ENCODE measurements at regions of chr1 and their contacts with region 1.

Region 1: GRCh38 chr1:225977937-225978748 is 21.0 kb downstream of the SDE2 start:
- DNase-seq: no peak
- ATAC-seq: no peak
- H3K4me3 ChIP-seq: no peak overlapping the region
- H3K27ac ChIP-seq: no peak overlapping the region
- H3K4me1 ChIP-seq: peaks cover 0 to 12% (median 0%) of the 10 kb centered on the region in 12 donors
- H3K27me3 ChIP-seq: no peaks in the 10 kb centered on the region
- CTCF ChIP-seq: no peak
- POLR2A ChIP-seq: no peak

Region 2: DNA sequence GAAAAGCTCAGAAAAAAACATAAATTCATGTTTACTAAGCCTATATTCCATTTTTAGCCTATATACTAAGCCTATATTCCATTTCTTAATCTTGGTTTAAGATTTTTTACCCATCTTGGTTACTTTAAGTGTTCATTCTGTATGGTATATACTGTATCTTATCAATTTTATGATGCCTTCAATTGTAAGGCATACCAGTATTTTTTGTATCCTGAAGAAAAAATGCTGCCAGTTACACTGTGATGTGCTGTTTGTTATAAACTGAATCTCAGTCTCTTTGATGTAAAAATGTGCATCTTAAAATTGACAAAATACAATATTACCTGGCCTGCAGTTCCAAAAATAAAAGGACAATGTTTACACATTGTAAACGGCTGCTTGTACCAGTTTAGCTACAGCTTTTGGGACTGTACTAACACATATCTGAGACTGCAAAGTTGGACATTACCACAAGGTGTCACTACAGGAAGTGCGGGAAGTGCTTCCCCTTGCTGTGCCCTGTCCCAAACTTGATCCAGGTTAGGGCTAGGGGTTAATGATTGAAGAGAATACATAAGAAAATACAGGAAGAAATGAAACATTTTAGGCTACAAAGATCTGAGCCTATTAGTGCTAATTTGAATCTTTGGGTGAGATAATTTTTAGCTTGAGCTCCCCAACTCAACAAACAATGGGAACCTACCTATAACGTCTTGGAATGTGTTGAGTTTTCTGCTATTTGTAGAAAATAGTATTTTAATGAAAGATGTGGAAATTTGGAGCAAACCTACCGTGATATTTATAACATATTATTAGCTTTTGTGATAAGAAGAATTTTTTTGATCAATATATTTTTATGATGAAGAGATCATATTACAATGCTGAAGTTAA is 659.2 kb before region 1 on chr1:
- intact Hi-C with region 1: loop called in 9 of 10 experiments (anchors 1 to 10 kb)
- DNase-seq: peak in 1 of 5 donors; percentile 26
- ATAC-seq: peak in 3 of 4 donors; percentile 62 to 78 (median 72)
- H3K4me3 ChIP-seq: no peak overlapping the region
- H3K27ac ChIP-seq: no peak overlapping the region
- H3K4me1 ChIP-seq: no peaks in the 10 kb centered on the region
- H3K27me3 ChIP-seq: peaks cover 0 to 17% (median 0%) of the 10 kb centered on the region in 9 donors
- CTCF ChIP-seq: peak; percentile 43 to 78 (median 60)
- POLR2A ChIP-seq: no peak

Region 3: DNA sequence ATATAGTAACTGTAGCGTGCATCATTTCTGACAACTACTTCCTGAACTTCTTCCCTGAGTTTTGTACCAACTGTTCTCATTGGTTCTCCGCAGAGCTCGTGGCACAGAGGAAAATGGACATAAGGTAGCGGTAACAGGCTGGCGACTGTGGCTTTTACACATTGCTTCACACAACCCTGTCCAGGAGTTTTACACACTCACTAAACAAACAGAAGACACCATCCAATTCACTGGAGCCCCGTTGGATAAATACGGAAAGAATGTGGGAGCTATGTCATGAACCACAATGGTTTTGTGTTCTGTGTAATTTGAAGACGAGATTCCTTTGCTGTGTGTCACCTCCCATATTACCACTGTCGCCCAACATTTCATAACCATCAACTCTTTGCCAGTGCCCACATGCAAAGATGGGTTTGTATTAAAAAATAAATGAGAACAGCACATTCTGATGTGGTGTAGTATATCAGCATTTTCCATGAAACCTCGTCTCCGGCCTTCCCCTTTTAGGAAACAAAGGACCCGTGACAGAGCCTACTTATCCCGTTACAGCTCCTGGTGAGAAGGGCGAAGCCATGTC is 277.9 kb before region 1 on chr1:
- intact Hi-C with region 1: no loop called
- DNase-seq: no peak
- ATAC-seq: peak in 1 of 4 donors; percentile 61
- H3K4me3 ChIP-seq: no peak overlapping the region
- H3K27ac ChIP-seq: peak overlapping the region in 2 of 12 donors; percentile 3 to 54
- H3K4me1 ChIP-seq: peaks cover 0 to 41% (median 13%) of the 10 kb centered on the region in 12 donors
- H3K27me3 ChIP-seq: no peaks in the 10 kb centered on the region
- CTCF ChIP-seq: no peak
- POLR2A ChIP-seq: no peak

Region 4: GRCh38 chr1:225772323-225772768 is 205.8 kb before region 1 on chr1:
- intact Hi-C with region 1: loop called in 8 of 10 experiments (anchors 5 to 10 kb)
- DNase-seq: peak; percentile 81 to 90 (median 84)
- ATAC-seq: peak; percentile 81 to 90 (median 88)
- H3K4me3 ChIP-seq: no peak overlapping the region
- H3K27ac ChIP-seq: peak overlapping the region in 9 of 12 donors; percentile 2 to 75 (median 44)
- H3K4me1 ChIP-seq: peaks cover under 1 to 70% (median 40%) of the 10 kb centered on the region in 12 donors
- H3K27me3 ChIP-seq: no peaks in the 10 kb centered on the region
- CTCF ChIP-seq: peak; percentile 76 to 94 (median 90)
- POLR2A ChIP-seq: no peak

Region 5: DNA sequence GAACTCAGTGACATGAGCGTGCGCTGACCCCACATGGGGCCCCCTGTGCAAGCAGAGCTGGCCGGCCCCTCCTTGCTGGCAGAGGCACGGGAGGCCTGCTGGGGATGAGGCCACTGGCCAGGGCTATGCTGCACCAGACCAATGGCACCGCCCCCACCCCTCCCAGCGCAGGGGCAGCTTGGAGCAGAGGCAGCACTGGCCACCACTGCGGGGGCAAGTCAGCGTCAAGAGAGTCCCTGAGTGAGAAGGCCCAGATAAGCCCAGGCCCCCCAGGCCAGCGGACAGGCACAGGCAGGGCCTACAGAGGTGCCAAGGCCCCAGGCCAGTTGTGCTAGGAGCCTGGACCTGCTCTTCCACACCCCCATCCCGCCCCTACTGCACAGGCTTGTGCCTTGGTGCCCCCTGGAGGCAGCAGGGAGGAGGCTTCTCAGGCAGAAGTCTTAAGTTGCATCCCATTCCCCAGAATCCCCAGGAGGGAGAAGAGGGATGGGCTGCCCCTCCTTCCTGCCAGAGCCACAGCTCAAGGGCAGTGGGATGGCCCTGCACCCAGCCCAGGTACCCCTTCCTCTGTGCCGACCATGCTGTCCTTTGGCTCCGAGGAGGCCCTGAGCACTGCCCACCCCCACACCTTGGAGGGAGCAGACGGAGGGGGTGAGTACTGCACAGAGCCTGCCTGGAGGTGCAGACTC is 132.4 kb before region 1 on chr1:
- intact Hi-C with region 1: loop called in 1 of 10 experiments (anchors 10 kb)
- DNase-seq: peak; percentile 77 to 87 (median 82)
- ATAC-seq: peak; percentile 66 to 83 (median 82)
- H3K4me3 ChIP-seq: no peak overlapping the region
- H3K27ac ChIP-seq: peak overlapping the region in 6 of 12 donors; percentile 6 to 71 (median 17)
- H3K4me1 ChIP-seq: peaks cover 0 to 30% (median 16%) of the 10 kb centered on the region in 12 donors
- H3K27me3 ChIP-seq: no peaks in the 10 kb centered on the region
- CTCF ChIP-seq: peak; percentile 56 to 87 (median 74)
- POLR2A ChIP-seq: no peak

Region 6: DNA sequence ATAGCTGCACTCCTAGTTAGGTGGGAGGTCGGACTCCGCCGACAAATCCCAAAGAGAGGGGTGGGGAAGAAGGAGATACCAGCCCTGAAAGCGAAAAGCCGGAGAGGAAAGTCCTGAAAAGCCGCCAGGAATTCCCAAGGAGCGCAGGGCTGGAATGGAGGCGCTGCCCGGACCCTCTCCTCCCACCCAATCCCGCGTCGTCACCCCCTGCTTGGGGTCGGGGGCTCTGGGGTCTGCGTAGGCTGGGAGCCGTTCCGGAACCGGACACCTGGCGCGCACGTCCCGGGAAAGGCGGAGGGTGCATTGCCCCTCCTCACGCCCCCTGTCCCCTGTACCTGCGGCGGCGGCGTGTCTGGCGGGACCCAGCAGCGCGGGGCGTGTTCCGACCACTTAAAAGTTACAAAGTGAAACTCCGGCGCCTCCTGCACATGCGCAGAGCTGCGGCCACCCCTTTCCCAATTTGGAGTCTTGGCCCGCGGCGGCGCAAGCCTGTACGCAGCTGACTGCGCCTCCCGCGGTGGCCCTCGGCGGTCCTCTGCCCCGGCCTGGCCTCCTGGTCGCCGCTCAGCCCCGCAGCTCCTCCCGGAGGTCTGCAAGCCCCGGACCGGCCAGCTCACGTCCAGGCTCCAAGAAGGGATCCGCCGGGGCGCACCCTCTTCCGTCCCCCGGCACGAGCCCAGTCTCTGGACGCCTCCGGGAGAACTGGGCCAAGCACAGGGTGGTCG is 96.0 kb before region 1 on chr1 and contains the start of gene TMEM63A:
- intact Hi-C with region 1: loop called in 1 of 10 experiments (anchors 10 kb)
- DNase-seq: peak; percentile 94 to 98 (median 96)
- ATAC-seq: peak; percentile 85 to 93 (median 92)
- H3K4me3 ChIP-seq: peak within 1 kb of the TSS; percentile 71 to 99 (median 90)
- H3K27ac ChIP-seq: peak within 1 kb of the TSS; percentile 82 to 98 (median 90)
- H3K4me1 ChIP-seq: peaks cover 6 to 56% (median 48%) of the 10 kb centered on the region in 12 donors
- H3K27me3 ChIP-seq: no peaks in the 10 kb centered on the region
- CTCF ChIP-seq: peak in 11 of 12 donors; percentile 16 to 71 (median 50)
- POLR2A ChIP-seq: peak in 1 of 2 donors; percentile 81
- total RNA-seq, gene TMEM63A: 14.4 to 42.7 (median 25.3) TPM

Region 7: DNA sequence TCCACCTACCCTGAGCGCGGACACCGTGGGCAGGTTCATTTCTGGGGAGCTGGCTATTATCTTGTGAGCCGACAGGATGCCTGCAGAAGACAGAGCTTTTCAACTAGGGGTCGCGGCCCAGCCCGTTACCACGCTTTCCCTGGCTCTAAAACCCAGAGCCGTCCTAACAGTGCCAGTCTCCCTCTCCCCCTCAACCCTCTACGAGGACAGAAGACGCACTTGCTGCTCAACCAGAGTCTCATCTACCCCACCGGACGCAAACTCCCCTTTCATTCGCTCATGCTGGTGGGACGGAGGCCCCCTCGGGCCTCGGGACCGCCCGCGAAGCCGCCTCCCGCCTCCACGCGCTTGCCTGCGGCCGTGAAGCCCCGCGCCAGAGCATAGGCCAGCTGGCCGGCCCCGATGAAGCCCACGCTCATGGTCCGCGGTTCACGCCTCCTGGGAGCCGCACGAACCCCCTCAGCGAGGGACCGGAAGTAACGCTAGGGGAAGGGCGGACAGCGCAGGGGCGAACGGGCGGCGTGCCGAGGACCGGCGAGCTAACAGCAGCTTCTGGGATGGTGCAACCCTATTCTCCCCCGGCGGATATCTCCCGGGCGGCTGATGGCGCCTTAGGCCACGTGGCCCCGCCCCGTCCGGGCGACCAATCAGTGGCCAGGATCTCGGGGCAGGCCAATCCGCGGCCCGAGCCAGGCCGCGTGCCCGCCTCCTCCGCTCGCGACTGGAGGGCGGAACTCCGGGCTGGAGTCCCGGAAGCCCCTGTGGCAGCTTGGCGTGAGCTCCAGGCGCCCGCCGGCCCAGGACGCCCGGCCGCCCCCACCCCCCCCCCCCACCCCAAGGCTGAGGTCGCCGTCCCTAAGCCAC is 54.2 kb before region 1 on chr1 and contains the start of gene PYCR2:
- intact Hi-C with region 1: loop called in 3 of 10 experiments (anchors 5 to 10 kb)
- DNase-seq: peak; percentile 95 to 98 (median 97)
- ATAC-seq: peak; percentile 99 to 100 (median 100)
- H3K4me3 ChIP-seq: peak within 1 kb of the TSS; percentile 52 to 96 (median 82)
- H3K27ac ChIP-seq: peak within 1 kb of the TSS; percentile 67 to 97 (median 93)
- H3K4me1 ChIP-seq: peaks cover 0 to 42% (median 19%) of the 10 kb centered on the region in 12 donors
- H3K27me3 ChIP-seq: no peaks in the 10 kb centered on the region
- CTCF ChIP-seq: peak in 2 of 12 donors; percentile 8 to 11
- POLR2A ChIP-seq: peak in 1 of 2 donors; percentile 96
- total RNA-seq, gene PYCR2: 53.6 to 82.4 (median 65.1) TPM

Region 8: DNA sequence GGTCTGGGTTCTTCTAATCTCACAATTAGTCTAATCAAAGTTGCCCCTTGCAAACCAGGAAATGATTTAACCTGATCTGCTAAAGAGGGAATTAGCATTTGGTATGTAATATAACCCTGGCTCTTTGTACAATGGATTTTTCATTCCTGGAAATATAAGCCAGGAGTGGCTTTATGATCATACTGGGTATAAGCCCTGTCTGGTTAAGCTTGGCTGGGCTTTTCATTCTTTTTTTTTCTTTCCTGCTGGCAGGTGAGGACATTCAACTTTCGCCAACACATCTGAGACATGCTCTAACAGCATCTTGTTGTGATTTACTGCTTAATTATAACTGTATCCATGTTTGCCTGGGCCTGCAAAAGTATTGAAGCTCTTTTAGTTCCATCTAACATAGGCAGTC is 41.4 kb after region 1 on chr1:
- intact Hi-C with region 1: no loop called
- DNase-seq: no peak
- ATAC-seq: no peak
- H3K4me3 ChIP-seq: no peak overlapping the region
- H3K27ac ChIP-seq: no peak overlapping the region
- H3K4me1 ChIP-seq: peaks cover 0 to 4% (median 0%) of the 10 kb centered on the region in 12 donors
- H3K27me3 ChIP-seq: no peaks in the 10 kb centered on the region
- CTCF ChIP-seq: no peak
- POLR2A ChIP-seq: no peak

Measured in heart left ventricle (tissue), 16 donors.